Thyroid gland (tissue), 4 donors: ENCODE measurements at regions of chr17 and their contacts with region 1.

Region 1: DNA sequence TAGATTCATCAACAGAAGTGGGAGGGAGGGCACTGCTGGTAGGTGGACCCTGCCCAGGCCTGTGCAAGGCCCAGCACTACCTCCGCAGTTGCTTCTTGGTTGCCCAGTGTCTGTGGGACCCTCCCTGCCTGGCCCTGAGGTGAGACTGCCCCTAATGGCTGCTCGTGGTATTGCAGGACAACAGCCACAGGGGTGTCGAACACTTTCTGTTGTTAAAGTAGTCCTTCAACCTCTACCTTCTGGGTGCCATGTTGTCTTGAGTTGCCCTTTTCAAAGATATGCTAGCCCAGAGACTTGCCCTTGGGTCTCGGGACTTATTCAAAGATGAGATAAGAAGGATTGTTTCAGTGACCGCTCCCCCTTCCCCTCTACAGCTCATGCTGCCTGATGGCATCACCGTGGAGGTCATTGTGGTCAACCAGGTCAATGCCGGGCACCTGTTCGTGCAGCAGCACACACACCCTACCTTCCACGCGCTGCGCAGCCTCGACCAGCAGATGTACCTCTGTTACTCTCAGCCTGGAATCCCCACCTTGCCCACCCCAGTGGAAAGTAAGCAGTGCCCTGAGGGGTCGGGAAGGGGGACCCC is 29.1 kb downstream of the AKAP1 start:
- DNase-seq: peak; percentile 42 to 55
- H3K4me3 ChIP-seq: no peak overlapping the region
- H3K27ac ChIP-seq: no peak overlapping the region
- H3K4me1 ChIP-seq: peaks cover 0 to 8% of the 10 kb centered on the region in 2 donors
- H3K27me3 ChIP-seq: no peaks in the 10 kb centered on the region
- CTCF ChIP-seq: peak; percentile 72 to 95 (median 81)
- POLR2A ChIP-seq: no peak

Region 2: GRCh38 chr17:56833809-56834379 is 280.3 kb before region 1 on chr17 and contains the starts of genes C17orf67 and DGKE:
- intact Hi-C with region 1: loop called (anchors 10 kb)
- DNase-seq: peak; percentile 97
- H3K4me3 ChIP-seq: peak within 1 kb of the TSS; percentile 29 to 88 (median 50)
- H3K27ac ChIP-seq: peak within 1 kb of the TSS; percentile 72 to 93 (median 80)
- H3K4me1 ChIP-seq: peaks cover 7 to 18% of the 10 kb centered on the region in 2 donors
- H3K27me3 ChIP-seq: no peaks in the 10 kb centered on the region
- CTCF ChIP-seq: no peak
- POLR2A ChIP-seq: peak; percentile 24 to 76
- total RNA-seq, gene C17orf67: 0.24 to 1.2 (median 1.2) TPM
- total RNA-seq, gene DGKE: 7.2 to 21.7 (median 14.7) TPM

Region 3: DNA sequence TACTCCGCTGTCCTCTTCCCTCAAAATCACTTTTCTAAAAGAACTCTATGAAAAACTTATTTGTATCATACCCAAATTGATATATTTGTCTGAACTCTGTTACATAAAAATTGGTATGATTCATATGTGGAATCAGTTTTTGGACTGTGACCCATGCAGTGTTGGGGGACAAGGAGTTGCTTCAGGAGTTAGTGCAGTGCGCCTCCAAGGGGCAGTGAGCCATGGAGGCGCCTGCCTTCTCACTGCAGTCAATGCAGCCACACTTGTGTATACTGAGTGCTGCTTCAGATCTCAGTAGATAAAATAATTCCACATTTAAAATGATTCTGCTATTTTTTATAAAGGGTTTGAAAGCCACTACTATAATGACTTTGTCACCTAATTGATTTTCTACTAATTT is 247.7 kb before region 1 on chr17:
- intact Hi-C with region 1: no loop called
- DNase-seq: peak; percentile 49 to 50
- H3K4me3 ChIP-seq: no peak overlapping the region
- H3K27ac ChIP-seq: no peak overlapping the region
- H3K4me1 ChIP-seq: peaks cover 0 to 9% of the 10 kb centered on the region in 2 donors
- H3K27me3 ChIP-seq: no peaks in the 10 kb centered on the region
- CTCF ChIP-seq: peak in 2 of 6 experiments; percentile 9 to 25
- POLR2A ChIP-seq: no peak

Region 4: GRCh38 chr17:56995766-56996165 is 118.4 kb before region 1 on chr17:
- intact Hi-C with region 1: loop called (anchors 5 kb)
- DNase-seq: no peak
- H3K4me3 ChIP-seq: no peak overlapping the region
- H3K27ac ChIP-seq: no peak overlapping the region
- H3K4me1 ChIP-seq: no peaks in the 10 kb centered on the region
- H3K27me3 ChIP-seq: no peaks in the 10 kb centered on the region
- CTCF ChIP-seq: no peak
- POLR2A ChIP-seq: no peak

Region 5: GRCh38 chr17:57051886-57052361 is 62.3 kb before region 1 on chr17:
- intact Hi-C with region 1: loop called (anchors 10 kb)
- DNase-seq: no peak
- H3K4me3 ChIP-seq: no peak overlapping the region
- H3K27ac ChIP-seq: peak overlapping the region in 1 of 3 donors; percentile 7
- H3K4me1 ChIP-seq: peaks cover 4 to 11% of the 10 kb centered on the region in 2 donors
- H3K27me3 ChIP-seq: no peaks in the 10 kb centered on the region
- CTCF ChIP-seq: no peak
- POLR2A ChIP-seq: no peak